Astrocyte of the cerebellum (primary cell): ENCODE measurements at regions of chr2 and their contacts with region 1.

Region 1: DNA sequence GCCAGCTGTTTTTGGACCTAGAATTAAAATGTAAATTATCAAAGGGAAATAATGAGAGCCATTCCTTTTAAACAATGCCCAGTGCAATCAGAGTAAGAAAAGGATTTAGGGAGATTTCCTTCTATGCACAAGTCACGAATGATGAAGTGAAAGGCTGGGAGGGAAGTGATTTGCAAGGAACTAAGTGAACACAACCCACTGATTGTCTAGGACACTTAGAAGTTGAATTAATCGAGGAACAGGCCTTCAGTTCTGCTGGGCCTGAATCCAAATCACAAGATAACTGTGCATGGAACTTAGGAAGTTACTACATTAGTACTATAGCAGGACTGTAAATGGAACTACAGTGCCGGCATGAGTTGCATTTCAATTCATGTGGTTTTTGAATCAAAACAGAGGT is 17.7 kb downstream of the MAP2 start:
- DNase-seq: no peak
- H3K4me3 ChIP-seq: no peak overlapping the region
- CTCF ChIP-seq: no peak

Region 2: GRCh38 chr2:208970070-208970469 is 471.5 kb before region 1 on chr2:
- in situ Hi-C with region 1: no loop called
- DNase-seq: no peak
- H3K4me3 ChIP-seq: no peak overlapping the region
- CTCF ChIP-seq: no peak

Region 3: DNA sequence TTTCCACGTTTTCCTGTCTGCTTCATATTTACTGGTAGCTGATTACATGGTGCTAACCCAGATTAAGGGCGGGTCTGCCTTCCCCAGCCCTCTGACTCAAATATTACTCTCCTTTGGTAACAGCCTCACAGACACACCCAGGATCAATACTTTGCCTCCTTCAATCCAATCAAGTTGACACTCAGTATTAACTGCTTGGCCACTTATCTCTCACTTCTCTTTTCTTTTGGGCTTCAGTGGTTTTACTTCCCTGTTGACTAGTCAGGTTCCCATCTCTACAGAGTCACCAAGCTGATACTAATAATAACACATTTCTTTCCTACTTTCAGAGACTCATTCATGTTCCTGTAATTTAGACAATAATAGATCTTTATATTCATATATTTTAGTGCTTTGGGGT is 319.9 kb before region 1 on chr2:
- in situ Hi-C with region 1: no loop called
- DNase-seq: no peak
- H3K4me3 ChIP-seq: no peak overlapping the region
- CTCF ChIP-seq: no peak

Region 4: GRCh38 chr2:209401788-209402187 is 39.8 kb before region 1 on chr2:
- in situ Hi-C with region 1: no loop called
- DNase-seq: no peak
- H3K4me3 ChIP-seq: no peak overlapping the region
- CTCF ChIP-seq: no peak

Region 5: DNA sequence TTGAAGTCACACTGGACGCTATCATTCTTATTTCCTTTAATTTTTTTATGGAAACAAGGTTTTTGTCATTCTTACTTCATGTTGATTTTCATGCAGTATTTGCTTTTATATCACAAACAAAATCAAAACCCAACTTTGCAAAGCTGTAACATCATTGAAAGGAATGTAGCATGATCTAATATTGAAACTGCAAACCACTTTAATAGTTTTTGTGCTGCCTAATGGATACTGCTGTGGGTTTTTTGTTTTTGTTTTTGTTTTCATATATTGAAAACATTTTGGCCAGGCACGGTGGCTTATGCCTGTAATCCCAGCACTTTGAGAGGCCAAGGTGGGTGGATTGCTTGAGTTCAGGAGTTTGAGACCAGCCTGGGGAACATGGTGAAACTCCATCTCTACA is 63.9 kb after region 1 on chr2:
- in situ Hi-C with region 1: no loop called
- DNase-seq: no peak
- H3K4me3 ChIP-seq: no peak overlapping the region
- CTCF ChIP-seq: no peak

Region 6: GRCh38 chr2:209536363-209536762 is 94.8 kb after region 1 on chr2:
- in situ Hi-C with region 1: loop called (anchors 5 kb)
- DNase-seq: no peak
- H3K4me3 ChIP-seq: no peak overlapping the region
- CTCF ChIP-seq: no peak